H1 (cell line): ENCODE measurements at regions of chr2 and their contacts with region 1.

Region 1: GRCh38 chr2:236512902-236513435 is 56.7 kb upstream of the ACKR3 start:
- DNase-seq: peak; percentile 53 to 70
- H3K4me3 ChIP-seq: no peak overlapping the region
- H3K27ac ChIP-seq: no peak overlapping the region
- H3K4me1 ChIP-seq: no peaks in the 10 kb centered on the region
- H3K27me3 ChIP-seq: no peaks in the 10 kb centered on the region; a peak in 1 of 7 replicates
- CTCF ChIP-seq: peak; percentile 93 to 97 (median 93)
- EP300 ChIP-seq: no peak
- POLR2A ChIP-seq: no peak
- RAD21 ChIP-seq: peak; percentile 87 to 88

Region 2: GRCh38 chr2:236464140-236464539 is 48.8 kb before region 1 on chr2:
- CTCF ChIA-PET with region 1: no interaction called
- POLR2A ChIA-PET with region 1: no interaction called
- DNase-seq: no peak
- H3K4me3 ChIP-seq: no peak overlapping the region
- H3K27ac ChIP-seq: no peak overlapping the region
- H3K4me1 ChIP-seq: no peaks in the 10 kb centered on the region
- H3K27me3 ChIP-seq: no peaks in the 10 kb centered on the region
- CTCF ChIP-seq: no peak
- EP300 ChIP-seq: no peak
- POLR2A ChIP-seq: no peak
- RAD21 ChIP-seq: no peak

Region 3: GRCh38 chr2:236526455-236527158 is 13.6 kb after region 1 on chr2:
- CTCF ChIA-PET with region 1: interaction called, 18 read pairs
- POLR2A ChIA-PET with region 1: interaction called, 3 read pairs
- DNase-seq: no peak
- H3K4me3 ChIP-seq: no peak overlapping the region
- H3K27ac ChIP-seq: no peak overlapping the region
- H3K4me1 ChIP-seq: no peaks in the 10 kb centered on the region; a peak in 1 of 7 replicates
- H3K27me3 ChIP-seq: no peaks in the 10 kb centered on the region
- CTCF ChIP-seq: no peak
- EP300 ChIP-seq: no peak
- POLR2A ChIP-seq: no peak
- RAD21 ChIP-seq: no peak

Region 4: DNA sequence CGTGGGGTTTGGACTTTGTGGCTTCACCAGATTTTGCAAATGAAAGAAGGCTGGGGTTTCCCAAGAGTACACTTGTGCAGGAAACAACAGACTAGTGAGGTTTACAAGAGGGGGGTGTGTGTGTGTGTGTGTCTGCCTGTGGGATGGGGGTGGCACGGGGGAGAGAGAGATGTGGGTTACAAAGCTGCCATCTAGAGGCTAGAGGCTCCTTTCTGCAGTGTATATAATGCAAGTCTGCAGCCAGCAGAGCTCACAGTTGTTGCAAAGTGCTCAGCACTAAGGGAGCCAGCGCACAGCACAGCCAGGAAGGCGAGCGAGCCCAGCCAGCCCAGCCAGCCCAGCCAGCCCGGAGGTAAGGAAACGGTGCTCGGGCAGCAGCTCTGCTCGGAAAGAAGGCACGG is 56.6 kb after region 1 on chr2 and contains the start of gene ACKR3:
- CTCF ChIA-PET with region 1: interaction called, 14 read pairs
- POLR2A ChIA-PET with region 1: no interaction called
- DNase-seq: peak; percentile 29 to 68
- H3K4me3 ChIP-seq: peak within 1 kb of the TSS; percentile 27 to 57 (median 36); a peak in 6 of 8 replicates
- H3K27ac ChIP-seq: no peak within 1 kb of the TSS
- H3K4me1 ChIP-seq: peaks cover 9 to 35% (median 19%) of the 10 kb centered on the region in 4 experiments
- H3K27me3 ChIP-seq: peaks cover 9 to 31% (median 19%) of the 10 kb centered on the region in 4 experiments
- CTCF ChIP-seq: peak; percentile 34 to 66 (median 61)
- EP300 ChIP-seq: no peak
- POLR2A ChIP-seq: no peak; a peak in 1 of 3 replicates
- RAD21 ChIP-seq: peak; percentile 66 to 75
- total RNA-seq, gene ACKR3: 0.73 and 1.4 TPM in 2 replicates

Region 5: DNA sequence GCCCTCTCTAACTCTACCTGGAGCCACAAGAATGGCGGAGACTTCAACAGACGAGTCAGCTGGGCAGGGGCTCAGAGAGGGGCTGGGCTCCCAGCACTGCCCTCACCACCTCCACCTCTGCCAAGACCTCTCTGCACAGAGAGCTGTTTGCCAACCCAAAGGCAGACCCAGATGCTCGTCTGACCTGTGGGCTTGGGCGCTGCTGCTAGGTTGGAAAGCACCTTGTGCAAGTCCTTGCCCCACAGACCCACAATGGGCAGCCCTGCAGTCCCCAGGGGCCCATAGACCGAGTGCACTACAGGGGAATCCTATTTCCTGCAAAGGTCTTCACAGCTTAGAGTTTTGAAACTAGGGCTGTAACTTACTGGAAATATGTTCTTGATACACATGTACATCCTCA is 70.0 kb after region 1 on chr2:
- CTCF ChIA-PET with region 1: no interaction called
- POLR2A ChIA-PET with region 1: no interaction called
- DNase-seq: no peak
- H3K4me3 ChIP-seq: no peak overlapping the region
- H3K27ac ChIP-seq: no peak overlapping the region
- H3K4me1 ChIP-seq: peaks cover 0 to 8% (median 5%) of the 10 kb centered on the region in 4 experiments; a peak in 4 of 7 replicates
- H3K27me3 ChIP-seq: no peaks in the 10 kb centered on the region
- CTCF ChIP-seq: no peak
- EP300 ChIP-seq: no peak
- POLR2A ChIP-seq: no peak
- RAD21 ChIP-seq: no peak

Region 6: DNA sequence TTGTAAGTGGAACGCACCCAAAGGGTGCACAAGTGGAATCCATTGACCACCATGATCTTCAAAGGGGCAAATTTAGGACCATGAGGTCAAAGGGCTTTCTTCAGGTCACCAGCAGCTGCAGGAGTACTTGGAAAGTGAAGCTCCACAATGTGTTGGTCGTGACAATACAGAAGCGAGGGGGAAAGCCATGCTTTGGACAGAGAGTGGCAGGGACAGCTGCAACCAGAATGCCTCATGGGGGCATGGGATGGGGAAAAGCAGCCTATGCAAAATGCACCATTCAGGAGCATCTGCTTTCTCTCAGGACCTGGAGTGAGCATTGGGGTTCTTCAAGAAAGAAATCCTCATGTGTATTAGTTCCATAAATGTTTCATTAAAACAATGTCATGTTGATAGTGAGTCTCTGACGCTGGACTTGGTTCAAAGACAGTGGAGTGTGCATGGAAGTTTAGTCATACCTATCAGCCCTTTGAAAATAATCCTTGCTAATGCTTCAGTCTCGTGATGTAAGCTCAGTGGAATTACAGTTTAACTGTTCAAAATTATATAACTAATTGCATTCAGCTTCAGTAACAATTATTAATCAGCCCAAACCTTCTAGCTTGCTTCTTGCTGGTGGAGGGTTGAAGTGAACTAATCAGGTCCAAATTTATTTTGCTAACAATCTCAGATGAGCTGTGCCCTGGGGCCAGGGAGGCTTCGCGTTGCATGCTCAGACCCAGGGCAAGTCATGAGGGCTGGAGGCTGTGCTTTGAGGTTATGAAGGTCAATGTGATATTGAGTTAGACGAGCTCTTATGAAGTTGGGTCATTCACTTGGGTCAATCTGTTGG is 98.2 kb after region 1 on chr2:
- CTCF ChIA-PET with region 1: interaction called, 25 read pairs
- POLR2A ChIA-PET with region 1: no interaction called
- DNase-seq: no peak
- H3K4me3 ChIP-seq: no peak overlapping the region
- H3K27ac ChIP-seq: no peak overlapping the region
- H3K4me1 ChIP-seq: peaks cover 0 to 3% (median 0%) of the 10 kb centered on the region in 4 experiments; a peak in 1 of 7 replicates
- H3K27me3 ChIP-seq: peaks cover 0 to 3% (median 0%) of the 10 kb centered on the region in 4 experiments; a peak in 1 of 7 replicates
- CTCF ChIP-seq: no peak
- EP300 ChIP-seq: no peak
- POLR2A ChIP-seq: no peak
- RAD21 ChIP-seq: no peak

Region 7: DNA sequence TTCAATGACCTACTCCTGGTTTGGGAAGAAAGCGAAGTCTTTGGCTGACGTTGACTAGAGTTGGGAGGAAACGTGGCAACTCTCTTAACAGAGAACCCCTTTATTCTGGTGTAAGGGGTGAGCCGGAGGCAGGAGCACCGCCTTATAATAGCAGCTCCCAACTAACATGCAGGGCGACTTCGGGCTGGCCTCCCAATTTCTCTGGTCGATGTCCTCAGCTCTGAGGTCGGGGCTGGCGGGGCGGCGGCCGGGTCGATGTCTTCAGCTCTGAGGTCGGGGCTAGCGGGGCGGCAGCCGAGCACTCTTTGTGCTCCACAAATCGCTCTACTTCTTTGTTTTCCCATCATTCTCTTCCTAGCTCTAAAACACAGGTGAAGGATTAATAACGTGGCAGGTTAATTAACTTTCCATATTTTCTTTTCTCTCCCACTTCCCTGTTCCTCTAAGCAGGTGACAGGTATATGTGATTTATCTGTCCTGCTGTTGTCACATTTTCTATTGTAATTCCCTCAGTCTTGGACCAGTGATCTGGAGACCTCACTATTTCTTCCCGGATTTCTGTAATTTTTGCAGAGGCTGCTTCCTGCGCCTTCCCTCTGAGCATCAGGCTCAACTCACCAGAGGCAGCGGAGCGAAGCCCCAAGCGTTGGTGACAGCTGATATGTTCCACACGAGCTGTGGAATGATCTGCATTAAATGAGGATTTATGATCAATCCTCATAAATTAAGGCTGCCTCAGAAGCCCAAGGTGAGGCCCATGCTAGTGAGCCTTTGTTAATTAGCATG is 121.0 kb after region 1 on chr2:
- CTCF ChIA-PET with region 1: no interaction called
- POLR2A ChIA-PET with region 1: no interaction called
- DNase-seq: no peak
- H3K4me3 ChIP-seq: no peak overlapping the region
- H3K27ac ChIP-seq: no peak overlapping the region
- H3K4me1 ChIP-seq: no peaks in the 10 kb centered on the region; a peak in 1 of 7 replicates
- H3K27me3 ChIP-seq: no peaks in the 10 kb centered on the region; a peak in 1 of 7 replicates
- CTCF ChIP-seq: no peak
- EP300 ChIP-seq: no peak
- POLR2A ChIP-seq: no peak
- RAD21 ChIP-seq: no peak

Region 8: GRCh38 chr2:237060534-237061312 is 547.8 kb after region 1 on chr2:
- CTCF ChIA-PET with region 1: interaction called, 33 read pairs
- POLR2A ChIA-PET with region 1: no interaction called
- DNase-seq: peak in 1 of 2 experiments; percentile 66
- H3K4me3 ChIP-seq: no peak overlapping the region
- H3K27ac ChIP-seq: no peak overlapping the region
- H3K4me1 ChIP-seq: peaks cover 0 to 2% (median under 1%) of the 10 kb centered on the region in 4 experiments; a peak in 1 of 7 replicates
- H3K27me3 ChIP-seq: no peaks in the 10 kb centered on the region
- CTCF ChIP-seq: peak; percentile 62 to 78 (median 76)
- EP300 ChIP-seq: no peak
- POLR2A ChIP-seq: no peak
- RAD21 ChIP-seq: peak; percentile 93